Activated T-helper 2 cell treated with anti-CD3 and anti-CD28 coated beads, Interferon-gamma antibody, Interleukin-2, Interleukin-4, amounts not matched to agents 10 μg/mL and 5 μg/mL and 100 μg/mL, durations not matched to agents 14 hours and 24 hours and 36 hours (primary cell): ENCODE measurements at regions of chr14 and their contacts with region 1.

Region 1: DNA sequence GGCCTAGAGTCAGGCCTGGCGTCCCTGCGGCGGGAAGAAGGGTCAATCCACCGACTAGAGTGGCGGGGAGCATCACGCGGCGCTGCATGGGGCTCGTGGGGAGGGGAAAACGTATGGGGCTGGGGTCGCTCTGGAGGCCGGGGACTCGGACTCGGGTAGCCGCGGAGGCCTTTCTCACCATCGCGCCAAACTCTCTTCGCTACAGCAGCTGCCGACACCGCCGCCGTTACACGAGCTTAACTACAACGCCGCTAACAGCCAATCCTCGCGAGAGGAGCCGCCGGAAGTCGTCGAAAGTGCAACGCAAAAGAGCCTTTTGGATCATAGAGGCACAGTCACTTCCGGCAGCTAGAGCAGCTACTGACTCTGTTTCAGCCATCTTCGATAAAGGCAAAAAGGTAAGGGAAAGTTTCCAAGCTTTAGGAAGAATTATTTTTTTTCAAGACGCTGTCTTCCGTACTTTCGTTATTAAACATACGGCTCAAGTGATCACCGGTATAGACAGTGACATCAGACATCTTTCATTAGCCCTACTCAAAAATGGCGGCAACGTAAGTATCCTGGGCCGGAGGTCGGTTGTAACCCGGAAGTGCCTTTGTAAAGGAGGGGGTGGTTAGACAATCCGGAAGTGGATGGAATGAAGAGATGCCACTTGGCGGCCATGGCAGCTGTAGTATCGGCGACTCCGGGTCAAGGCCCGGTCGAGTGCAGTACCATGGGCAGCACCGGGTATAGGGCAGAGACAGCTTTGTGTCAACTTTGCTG is at the starts of genes ERH and SLC39A9:
- DNase-seq: peak; percentile 92
- H3K4me3 Mint-ChIP-seq: peak within 1 kb of the TSS; percentile 97
- H3K27ac Mint-ChIP-seq: peak within 1 kb of the TSS; percentile 99
- H3K4me1 Mint-ChIP-seq: peaks cover 50% of the 10 kb centered on the region
- H3K27me3 Mint-ChIP-seq: no peaks in the 10 kb centered on the region
- total RNA-seq, gene ERH: 390 and 410 TPM in 2 replicates
- total RNA-seq, gene SLC39A9: 43.7 and 46.7 TPM in 2 replicates

Region 2: DNA sequence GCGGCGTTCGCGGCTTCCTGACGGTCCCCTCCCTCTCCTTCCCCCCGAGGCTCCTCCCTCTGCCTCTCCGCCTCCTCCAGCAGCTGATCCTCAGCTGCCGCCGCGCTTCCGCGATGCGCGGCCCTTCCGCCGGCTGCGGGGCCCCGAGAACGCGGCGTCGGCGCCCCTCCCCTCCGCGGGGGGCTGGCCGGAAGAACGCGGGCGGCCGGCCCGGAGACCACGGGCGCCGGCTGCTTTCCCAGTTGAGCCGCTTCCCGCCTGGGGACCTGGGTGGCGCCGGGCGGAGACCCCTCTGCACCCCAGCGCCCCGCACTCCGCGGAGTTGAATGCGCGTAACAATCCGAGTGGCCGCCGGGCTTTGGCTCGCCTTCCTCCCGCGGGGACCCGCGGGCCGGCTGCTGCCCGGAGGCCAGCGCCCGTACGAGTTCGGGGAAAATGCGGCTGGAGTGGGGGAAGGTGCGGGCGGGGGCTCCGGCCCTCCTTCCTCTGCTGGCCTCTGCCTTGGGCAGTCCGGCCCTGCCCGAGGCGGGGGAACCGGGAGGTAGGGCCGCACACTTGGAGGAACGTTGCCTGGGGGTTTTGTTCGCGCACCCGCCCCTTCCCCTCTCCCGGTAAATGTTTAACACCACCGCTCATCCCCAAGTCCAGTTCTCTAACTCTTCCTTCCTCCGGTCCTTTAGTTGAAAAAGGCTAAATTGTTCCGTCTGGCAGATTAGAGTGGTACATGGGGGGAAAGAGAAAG is 244.9 kb before region 1 on chr14:
- intact Hi-C with region 1: loop called (anchors 1 kb)
- DNase-seq: peak; percentile 93
- H3K4me3 Mint-ChIP-seq: peak overlapping the region; percentile 91
- H3K27ac Mint-ChIP-seq: peak overlapping the region; percentile 92
- H3K4me1 Mint-ChIP-seq: peaks cover 28% of the 10 kb centered on the region
- H3K27me3 Mint-ChIP-seq: peaks cover 35% of the 10 kb centered on the region

Region 3: DNA sequence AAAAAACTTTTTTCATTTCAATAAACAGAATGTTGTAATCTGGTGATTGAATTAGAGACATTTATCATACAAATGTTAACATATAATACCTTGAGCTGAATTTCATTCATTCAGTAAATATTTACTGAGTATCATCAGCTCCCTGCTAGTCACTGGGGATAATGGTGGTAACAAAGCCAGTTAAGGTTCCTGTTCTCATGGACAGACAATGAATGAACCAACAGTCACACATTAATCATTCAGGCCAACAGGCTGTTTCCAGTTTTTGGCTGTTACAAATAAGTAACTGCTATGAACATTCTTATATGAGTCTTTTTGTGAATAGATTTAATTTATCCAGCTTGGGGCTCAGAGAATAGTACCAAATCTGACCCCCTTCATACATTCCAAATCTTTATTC is 193.5 kb before region 1 on chr14:
- intact Hi-C with region 1: no loop called
- DNase-seq: no peak
- H3K4me3 Mint-ChIP-seq: no peak overlapping the region
- H3K27ac Mint-ChIP-seq: no peak overlapping the region
- H3K4me1 Mint-ChIP-seq: peaks cover 4% of the 10 kb centered on the region
- H3K27me3 Mint-ChIP-seq: no peaks in the 10 kb centered on the region

Region 4: GRCh38 chr14:69354383-69355153 is 43.7 kb before region 1 on chr14:
- intact Hi-C with region 1: loop called (anchors 5 kb)
- DNase-seq: peak; percentile 57
- H3K4me3 Mint-ChIP-seq: peak overlapping the region; percentile 2
- H3K27ac Mint-ChIP-seq: peak overlapping the region; percentile 79
- H3K4me1 Mint-ChIP-seq: peaks cover 26% of the 10 kb centered on the region
- H3K27me3 Mint-ChIP-seq: peaks cover 2% of the 10 kb centered on the region